Panc1 (cell line): ENCODE measurements at regions of chr13 and their contacts with region 1.

Region 1: GRCh38 chr13:40789275-40790133 is at the start of gene SLC25A15:
- DNase-seq: no peak
- ATAC-seq: peak; percentile 99
- H3K4me3 ChIP-seq: peak within 1 kb of the TSS; percentile 68 to 72
- H3K27ac ChIP-seq: peak within 1 kb of the TSS; percentile 85
- H3K4me1 ChIP-seq: peaks cover 6% of the 10 kb centered on the region; the same call in 1 of the 2 replicates
- H3K27me3 ChIP-seq: no peaks in the 10 kb centered on the region
- CTCF ChIP-seq: peak; percentile 74
- total RNA-seq, gene SLC25A15: 16.4 TPM

Region 2: DNA sequence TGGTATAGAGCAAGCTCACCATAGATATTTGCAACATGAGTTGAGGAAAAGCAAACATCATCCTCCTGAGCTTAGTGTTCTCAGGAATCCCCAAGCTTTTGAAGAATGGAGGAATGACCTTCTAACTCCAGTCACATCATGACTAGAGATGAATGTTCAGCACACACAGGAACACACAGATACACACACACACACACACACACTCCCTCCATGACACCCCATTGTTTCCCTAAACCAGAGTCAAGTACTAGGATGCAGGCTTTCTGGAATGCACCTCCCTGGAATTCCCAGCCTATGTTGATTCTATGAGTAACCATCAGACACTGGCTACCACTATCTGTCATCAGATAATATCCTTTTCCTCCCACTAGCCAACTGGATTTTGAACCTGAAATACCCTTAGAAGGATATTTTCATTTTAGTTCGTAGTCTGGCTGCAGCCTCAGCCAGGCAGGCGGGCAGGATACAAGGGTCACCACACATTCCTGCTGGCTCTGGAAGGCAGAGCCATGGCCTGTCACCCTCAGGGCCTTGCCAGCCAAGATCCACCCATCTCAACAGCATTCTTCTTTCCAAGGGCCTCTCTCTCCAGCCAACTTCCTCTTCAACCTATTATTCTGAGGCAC is 285.4 kb before region 1 on chr13:
- CTCF ChIA-PET with region 1: no interaction called
- POLR2A ChIA-PET with region 1: no interaction called
- in situ Hi-C with region 1: no loop called
- intact Hi-C with region 1: no loop called
- DNase-seq: no peak
- ATAC-seq: peak; percentile 65
- H3K4me3 ChIP-seq: no peak overlapping the region
- H3K27ac ChIP-seq: no peak overlapping the region
- H3K4me1 ChIP-seq: no peaks in the 10 kb centered on the region
- H3K27me3 ChIP-seq: no peaks in the 10 kb centered on the region
- CTCF ChIP-seq: no peak

Region 3: GRCh38 chr13:40624383-40624782 is 165.1 kb before region 1 on chr13:
- CTCF ChIA-PET with region 1: no interaction called
- POLR2A ChIA-PET with region 1: no interaction called
- in situ Hi-C with region 1: no loop called
- intact Hi-C with region 1: no loop called
- DNase-seq: no peak
- ATAC-seq: no peak
- H3K4me3 ChIP-seq: no peak overlapping the region
- H3K27ac ChIP-seq: no peak overlapping the region
- H3K4me1 ChIP-seq: no peaks in the 10 kb centered on the region
- H3K27me3 ChIP-seq: no peaks in the 10 kb centered on the region
- CTCF ChIP-seq: no peak

Region 4: GRCh38 chr13:40779049-40779448 is 10.5 kb before region 1 on chr13:
- CTCF ChIA-PET with region 1: interaction called, 10 read pairs
- POLR2A ChIA-PET with region 1: no interaction called
- in situ Hi-C with region 1: no loop called
- intact Hi-C with region 1: no loop called
- DNase-seq: no peak
- ATAC-seq: no peak
- H3K4me3 ChIP-seq: no peak overlapping the region
- H3K27ac ChIP-seq: no peak overlapping the region
- H3K4me1 ChIP-seq: no peaks in the 10 kb centered on the region
- H3K27me3 ChIP-seq: no peaks in the 10 kb centered on the region
- CTCF ChIP-seq: no peak